ENCODE measurements at regions of chr1 and their contacts with region 1.

Region 1: DNA sequence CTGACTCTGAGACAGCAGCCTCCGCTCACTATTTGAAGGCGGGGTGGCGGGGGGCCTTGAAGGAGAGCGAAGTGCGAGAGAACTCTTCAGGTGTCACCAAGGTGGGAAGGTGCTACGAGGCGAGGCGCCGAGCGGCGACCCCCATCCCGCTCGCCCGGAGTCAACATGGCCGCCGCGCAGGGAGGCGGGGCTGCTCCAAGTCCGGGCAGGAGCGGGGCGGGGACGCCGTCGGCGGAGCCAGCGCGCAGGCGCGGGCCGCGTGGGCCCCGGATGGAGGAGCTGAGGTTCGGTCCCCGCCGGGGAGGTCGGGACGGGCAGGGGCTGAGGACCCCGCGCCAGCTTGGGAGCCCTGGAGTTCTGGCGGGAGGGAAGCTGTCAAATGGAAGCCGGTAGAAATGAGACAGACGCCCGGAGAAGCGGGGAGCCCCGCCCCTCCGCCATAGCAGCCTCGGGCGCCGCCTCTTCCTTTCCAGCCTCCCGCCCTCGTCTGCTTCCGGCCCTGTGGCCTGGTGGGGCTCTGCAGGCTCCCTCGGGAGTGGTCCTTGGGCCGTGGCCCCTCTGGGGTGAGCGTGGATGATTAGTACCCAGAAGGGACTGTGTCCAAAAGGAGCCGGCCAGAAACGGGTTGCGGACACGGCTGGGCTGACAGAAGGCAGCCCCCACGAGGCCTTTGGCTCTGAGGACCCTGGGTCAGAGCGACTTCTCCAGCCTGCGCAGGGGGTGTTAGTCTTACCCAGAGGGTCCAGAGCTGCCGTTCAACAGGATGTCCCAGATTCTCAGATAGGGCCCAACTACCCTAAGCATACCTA is at the start of gene PIGV:
- DNase-seq: peak; percentile 89
- ATAC-seq: peak; percentile 60
- H3K4me3 Mint-ChIP-seq: peak within 1 kb of the TSS; percentile 97
- H3K27ac Mint-ChIP-seq: peak within 1 kb of the TSS; percentile 98
- H3K4me1 Mint-ChIP-seq: peaks cover 52% of the 10 kb centered on the region
- H3K27me3 Mint-ChIP-seq: no peaks in the 10 kb centered on the region; the same call in 1 of the 2 replicates
- CTCF ChIP-seq: no peak
- total RNA-seq, gene PIGV: 13.1 to 15.0 TPM (median 13.7 TPM) in 3 replicates

Region 2: DNA sequence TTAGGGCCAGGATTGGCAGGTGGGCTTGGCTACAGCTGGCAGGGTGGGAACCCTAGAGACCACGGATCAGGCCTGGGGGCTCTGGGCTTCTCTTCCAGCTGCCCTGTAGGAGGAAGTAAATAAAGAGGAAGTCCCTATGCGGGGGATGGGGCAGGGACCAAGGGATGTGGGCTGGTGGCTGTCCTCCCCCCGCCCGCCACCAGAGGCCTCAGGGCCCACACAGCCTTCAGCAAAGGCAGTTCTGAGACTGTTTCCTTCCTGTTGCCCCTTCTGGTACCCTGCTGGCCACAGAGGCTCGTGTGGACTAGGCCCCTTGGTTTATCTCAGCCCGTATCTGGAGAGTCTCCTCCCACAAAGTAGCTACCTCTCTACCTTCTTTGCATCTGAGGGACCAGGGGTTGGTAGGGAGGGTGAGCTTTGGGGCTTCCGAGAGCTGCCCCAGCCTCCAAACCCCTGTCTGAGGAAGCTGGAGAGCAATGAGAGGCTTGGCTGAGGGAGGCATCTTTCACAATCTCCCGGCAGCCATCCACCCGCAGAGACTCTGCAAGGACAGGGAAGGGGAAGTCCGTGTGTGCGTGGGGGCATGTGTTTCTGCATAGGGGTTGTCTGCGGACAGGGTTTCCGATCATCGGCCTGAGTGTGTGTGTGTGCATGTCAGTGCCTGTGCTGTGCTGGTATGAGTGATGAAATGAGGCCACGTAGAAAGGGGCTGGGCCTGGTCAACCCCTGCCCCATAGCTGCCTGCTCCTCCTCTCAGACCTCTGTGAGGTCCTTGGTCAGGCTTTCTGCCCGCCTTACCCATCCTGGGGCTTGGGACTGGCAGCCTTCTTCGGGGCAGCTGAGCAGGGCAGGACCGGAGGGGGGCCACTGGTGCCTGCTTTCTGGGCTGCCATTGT is 245.8 kb before region 1 on chr1:
- CTCF ChIA-PET with region 1: interaction called, 17 read pairs
- POLR2A ChIA-PET with region 1: no interaction called
- DNase-seq: peak; percentile 73
- ATAC-seq: peak; percentile 93
- H3K4me3 Mint-ChIP-seq: no peak overlapping the region
- H3K27ac Mint-ChIP-seq: peak overlapping the region; percentile 40
- H3K4me1 Mint-ChIP-seq: peaks cover 26% of the 10 kb centered on the region
- H3K27me3 Mint-ChIP-seq: no peaks in the 10 kb centered on the region
- CTCF ChIP-seq: no peak

Region 3: DNA sequence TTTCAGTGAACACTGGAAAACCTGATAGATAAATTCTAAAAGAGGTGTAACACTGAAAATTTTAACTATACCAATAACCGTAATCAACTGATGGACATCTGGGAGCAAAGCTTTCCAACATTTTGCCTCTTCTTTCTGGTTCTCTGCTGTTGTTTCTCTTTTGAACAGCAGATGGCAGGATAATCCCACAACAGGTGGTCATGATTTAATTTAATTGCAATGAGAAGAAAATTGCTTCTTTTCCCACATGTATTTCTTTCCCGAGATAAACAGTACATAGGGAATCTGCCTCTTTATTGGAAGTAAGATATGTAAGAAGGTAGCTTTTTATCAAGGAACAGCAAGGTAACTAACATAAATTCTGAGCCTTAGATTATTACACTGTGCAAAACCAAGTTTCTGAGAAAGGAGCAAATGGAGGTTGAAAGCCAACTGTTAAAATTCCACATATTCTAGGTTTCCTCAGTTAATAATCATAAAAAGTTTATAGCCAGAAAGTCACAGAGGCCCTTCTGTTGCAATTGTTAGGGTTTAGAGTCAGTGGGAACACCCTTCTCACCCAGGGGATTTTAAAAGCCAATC is 185.4 kb before region 1 on chr1:
- CTCF ChIA-PET with region 1: interaction called, 110 read pairs
- POLR2A ChIA-PET with region 1: interaction called, 4 read pairs
- DNase-seq: no peak
- ATAC-seq: no peak
- H3K4me3 Mint-ChIP-seq: no peak overlapping the region
- H3K27ac Mint-ChIP-seq: no peak overlapping the region
- H3K4me1 Mint-ChIP-seq: peaks cover 23% of the 10 kb centered on the region
- H3K27me3 Mint-ChIP-seq: no peaks in the 10 kb centered on the region; the same call in 1 of the 2 replicates
- CTCF ChIP-seq: peak; percentile 61; the same call in 1 of the 2 replicates

Region 4: GRCh38 chr1:26692793-26693490 is 95.0 kb before region 1 on chr1:
- CTCF ChIA-PET with region 1: interaction called, 33 read pairs
- POLR2A ChIA-PET with region 1: interaction called, 19 read pairs
- DNase-seq: peak; percentile 93
- ATAC-seq: peak; percentile 65
- H3K4me3 Mint-ChIP-seq: peak overlapping the region; percentile 86
- H3K27ac Mint-ChIP-seq: peak overlapping the region; percentile 100
- H3K4me1 Mint-ChIP-seq: peaks cover 34% of the 10 kb centered on the region
- H3K27me3 Mint-ChIP-seq: no peaks in the 10 kb centered on the region
- CTCF ChIP-seq: no peak

Region 5: DNA sequence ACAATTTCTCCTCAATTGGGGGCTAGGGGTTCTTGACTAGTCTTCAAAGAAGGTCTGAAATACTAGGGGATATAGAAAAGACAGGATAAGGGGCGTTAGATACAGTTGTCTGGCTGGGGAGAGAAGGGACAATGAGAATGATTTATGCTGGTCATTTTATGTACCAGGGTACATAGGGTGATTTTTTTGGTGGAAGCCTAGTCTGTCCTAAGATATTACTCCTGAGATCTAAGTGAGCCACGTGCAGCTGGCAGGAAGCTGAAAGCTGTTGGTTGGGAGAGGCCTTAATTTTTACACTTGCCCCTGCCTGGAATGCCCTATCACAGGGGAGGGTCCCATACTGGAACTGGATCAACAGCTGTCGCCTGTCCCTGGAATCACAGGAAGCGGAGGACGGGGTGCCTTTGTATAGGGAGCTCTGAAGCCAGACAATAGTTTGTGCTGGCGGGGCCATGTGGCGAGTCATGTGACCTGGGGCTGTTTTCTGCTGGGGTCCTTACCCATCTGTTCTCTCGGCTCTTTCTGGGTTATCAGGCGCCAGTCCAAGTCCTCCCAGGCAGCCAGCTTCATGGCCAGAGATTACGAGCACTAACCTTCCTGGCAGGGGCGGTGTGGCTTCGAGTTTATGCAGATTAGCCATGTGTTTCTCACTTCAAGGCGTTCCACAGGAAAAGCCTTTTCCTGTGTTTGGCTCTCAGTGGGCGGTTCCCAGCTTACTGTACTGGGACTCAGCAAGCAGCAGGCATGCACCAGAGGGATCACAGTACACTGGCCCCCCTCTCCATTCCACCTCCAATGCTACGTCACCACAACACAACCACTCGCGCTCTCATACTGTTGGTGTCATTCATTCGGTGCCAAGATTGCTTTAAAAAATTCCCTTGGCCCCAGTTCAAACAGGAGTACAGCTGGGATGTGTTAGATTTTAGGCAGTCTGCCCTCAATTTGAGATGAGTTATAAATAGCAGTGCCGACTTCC is 64.6 kb before region 1 on chr1:
- CTCF ChIA-PET with region 1: interaction called, 21 read pairs
- POLR2A ChIA-PET with region 1: interaction called, 3 read pairs
- DNase-seq: peak; percentile 72
- ATAC-seq: peak; percentile 80
- H3K4me3 Mint-ChIP-seq: peak overlapping the region; percentile 59
- H3K27ac Mint-ChIP-seq: peak overlapping the region; percentile 78
- H3K4me1 Mint-ChIP-seq: peaks cover 82% of the 10 kb centered on the region
- H3K27me3 Mint-ChIP-seq: no peaks in the 10 kb centered on the region
- CTCF ChIP-seq: no peak

Region 6: DNA sequence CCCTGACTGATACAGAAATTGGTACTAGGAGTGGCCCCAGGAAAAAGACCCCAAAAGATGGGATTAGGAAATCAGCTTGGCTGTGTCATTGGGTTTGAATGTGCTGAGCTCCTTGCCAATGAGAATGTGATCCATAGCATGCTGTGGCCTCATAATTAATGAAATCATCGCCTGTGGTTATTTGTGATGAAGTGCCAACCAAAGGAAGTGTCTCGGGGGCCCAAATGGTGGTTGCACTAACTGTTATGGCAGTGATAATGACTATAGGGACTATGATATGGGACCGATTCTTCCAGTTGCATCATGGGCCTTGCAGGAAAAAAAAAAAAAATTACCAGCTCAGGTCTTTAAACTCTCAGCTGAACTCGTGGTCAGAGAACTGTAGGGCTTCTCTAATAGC is 23.1 kb after region 1 on chr1:
- CTCF ChIA-PET with region 1: interaction called, 17 read pairs
- POLR2A ChIA-PET with region 1: no interaction called
- DNase-seq: no peak
- ATAC-seq: no peak
- H3K4me3 Mint-ChIP-seq: no peak overlapping the region
- H3K27ac Mint-ChIP-seq: no peak overlapping the region
- H3K4me1 Mint-ChIP-seq: no peaks in the 10 kb centered on the region
- H3K27me3 Mint-ChIP-seq: no peaks in the 10 kb centered on the region; the same call in 1 of the 2 replicates
- CTCF ChIP-seq: no peak